ENCODE measurements at regions of chr22 and their contacts with region 1.

Region 1: DNA sequence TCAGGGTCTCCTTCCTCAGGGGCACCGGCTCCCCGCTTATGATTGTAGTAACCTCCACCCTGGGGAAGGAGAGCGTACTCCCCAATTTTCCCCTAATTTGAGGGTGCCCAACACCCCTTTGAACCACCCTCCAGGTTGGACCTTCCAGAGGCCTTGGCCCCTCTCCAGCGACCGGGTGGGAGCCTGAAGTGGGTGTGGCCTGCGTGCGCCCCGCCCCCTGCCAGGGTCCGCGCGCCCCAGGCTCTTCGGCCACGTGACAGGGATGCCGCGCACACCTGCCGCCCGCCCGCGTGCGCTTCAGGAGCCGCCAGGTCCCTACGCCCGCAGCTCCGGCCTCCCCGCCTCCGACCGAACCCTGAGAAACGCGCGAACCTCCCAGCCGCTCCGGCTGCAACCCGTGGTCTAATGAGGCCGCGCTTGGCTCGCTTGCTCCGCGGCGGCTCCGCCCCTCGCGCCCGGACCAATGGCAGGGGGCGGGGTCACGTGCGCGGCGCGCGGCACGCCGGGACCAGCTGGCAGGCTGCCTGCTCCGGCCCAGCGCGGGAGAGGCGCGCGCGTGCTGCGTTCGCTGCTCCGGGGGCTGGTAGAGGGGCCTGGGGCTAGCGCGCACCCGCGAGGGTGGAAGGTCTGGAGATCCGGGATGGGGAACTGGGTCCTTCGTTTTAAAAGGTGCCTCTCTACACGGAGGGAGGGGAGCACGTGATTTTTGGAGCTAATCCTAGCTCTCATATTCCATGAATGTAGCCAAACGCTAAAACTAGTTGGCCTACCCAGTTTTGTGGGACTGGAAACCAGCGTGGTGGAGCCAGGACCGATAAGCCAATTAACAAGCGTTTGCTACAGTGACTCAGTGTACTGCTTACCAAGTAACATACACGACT is at the start of gene FOXRED2:
- DNase-seq: peak; percentile 92
- H3K4me3 Mint-ChIP-seq: peak within 1 kb of the TSS; percentile 72
- H3K27ac Mint-ChIP-seq: peak within 1 kb of the TSS; percentile 54
- H3K4me1 Mint-ChIP-seq: peaks cover 19% of the 10 kb centered on the region
- H3K27me3 Mint-ChIP-seq: no peaks in the 10 kb centered on the region
- total RNA-seq, gene FOXRED2: 15.2 to 15.9 TPM

Region 2: DNA sequence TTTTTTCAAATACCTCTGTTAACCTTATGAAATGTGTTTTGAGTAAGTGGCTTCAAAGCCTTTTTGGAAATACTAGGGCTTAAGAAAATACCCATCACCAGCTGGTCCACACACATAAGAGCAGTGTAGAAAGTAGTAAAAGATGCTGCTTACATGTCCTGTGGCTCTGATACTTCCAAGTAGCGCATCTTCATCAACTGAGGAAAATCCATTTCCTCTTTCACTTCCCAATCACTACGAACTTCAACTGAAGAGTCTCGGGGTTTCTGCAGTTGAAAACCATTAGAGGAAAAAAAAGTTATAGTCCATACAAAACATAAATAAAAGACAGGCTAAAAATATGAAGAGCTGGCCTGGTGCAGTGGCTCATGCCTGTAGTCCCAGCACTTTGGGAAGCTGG is 13.5 kb after region 1 on chr22:
- CTCF ChIA-PET with region 1: interaction called, 19 read pairs
- POLR2A ChIA-PET with region 1: interaction called, 6 read pairs
- intact Hi-C with region 1: no loop called
- DNase-seq: no peak
- H3K4me3 Mint-ChIP-seq: no peak overlapping the region
- H3K27ac Mint-ChIP-seq: no peak overlapping the region
- H3K4me1 Mint-ChIP-seq: peaks cover 4% of the 10 kb centered on the region
- H3K27me3 Mint-ChIP-seq: no peaks in the 10 kb centered on the region

Region 3: GRCh38 chr22:36734171-36735058 is 227.5 kb after region 1 on chr22:
- CTCF ChIA-PET with region 1: no interaction called
- POLR2A ChIA-PET with region 1: no interaction called
- intact Hi-C with region 1: no loop called
- DNase-seq: no peak
- H3K4me3 Mint-ChIP-seq: no peak overlapping the region
- H3K27ac Mint-ChIP-seq: no peak overlapping the region
- H3K4me1 Mint-ChIP-seq: no peaks in the 10 kb centered on the region
- H3K27me3 Mint-ChIP-seq: peaks cover 32% of the 10 kb centered on the region